ENCODE measurements at regions of chr21 and their contacts with region 1.

Region 1: DNA sequence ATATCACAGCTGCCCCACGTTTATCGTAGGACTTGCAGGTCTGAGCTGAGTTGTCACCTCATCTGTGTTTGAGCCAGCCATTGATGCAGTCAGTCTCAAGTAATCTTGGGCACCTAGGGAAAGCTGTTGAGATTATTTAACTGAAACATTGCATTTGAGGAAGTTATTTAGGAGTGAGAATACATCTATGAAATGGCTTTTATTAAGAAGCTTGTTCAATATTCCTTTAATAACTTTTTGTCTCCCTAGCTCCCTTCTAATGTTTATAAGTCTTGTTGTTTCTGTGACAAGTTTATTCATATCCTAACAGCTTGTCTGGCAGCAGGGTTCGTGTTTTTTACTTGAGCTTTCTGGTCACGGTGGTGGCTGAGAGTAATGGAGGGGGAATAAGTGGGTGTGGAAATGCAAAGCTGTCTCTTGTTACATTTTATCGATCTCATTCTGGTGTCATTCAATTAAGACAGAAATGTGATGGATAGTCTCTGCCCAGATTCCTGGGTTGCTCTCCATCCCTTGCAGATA is 555.9 kb downstream of the USP25 start:
- DNase-seq: no peak
- ATAC-seq: no peak
- H3K4me3 ChIP-seq: no peak overlapping the region
- H3K27ac ChIP-seq: no peak overlapping the region
- H3K4me1 ChIP-seq: peaks cover 14 to 49% of the 10 kb centered on the region in 2 donors
- H3K27me3 ChIP-seq: no peaks in the 10 kb centered on the region
- CTCF ChIP-seq: no peak
- POLR2A ChIP-seq: no peak

Region 2: DNA sequence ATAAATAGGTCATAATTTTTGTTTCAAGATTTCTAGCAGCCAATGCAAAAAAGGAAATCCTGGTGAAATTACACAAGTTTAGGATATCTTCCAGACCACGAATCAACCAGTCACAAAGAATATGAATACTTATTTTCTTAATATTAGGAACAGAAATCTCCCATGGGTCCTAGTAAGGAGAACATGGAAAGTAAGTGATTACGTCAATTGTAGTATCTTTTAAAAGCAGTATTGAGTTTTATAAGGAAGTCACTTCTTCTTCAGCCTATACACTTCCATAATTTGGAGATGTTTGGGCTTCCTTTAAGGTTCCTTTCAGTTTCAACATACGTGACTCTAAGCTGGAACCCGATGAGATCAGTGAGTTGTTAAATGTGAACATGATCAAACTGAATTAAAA is 21.3 kb before region 1 on chr21:
- in situ Hi-C with region 1: no loop called
- intact Hi-C with region 1: no loop called
- DNase-seq: no peak
- ATAC-seq: peak; percentile 50 to 51
- H3K4me3 ChIP-seq: peak overlapping the region; percentile 2 to 15 (median 9)
- H3K27ac ChIP-seq: peak overlapping the region; percentile 4 to 90 (median 41)
- H3K4me1 ChIP-seq: peaks cover 8 to 19% of the 10 kb centered on the region in 2 donors
- H3K27me3 ChIP-seq: no peaks in the 10 kb centered on the region
- CTCF ChIP-seq: no peak
- POLR2A ChIP-seq: no peak

Region 3: GRCh38 chr21:16302851-16303282 is 17.2 kb after region 1 on chr21:
- in situ Hi-C with region 1: no loop called
- intact Hi-C with region 1: loop called (anchors 2 kb)
- DNase-seq: peak; percentile 62 to 76
- ATAC-seq: peak; percentile 89 to 93
- H3K4me3 ChIP-seq: peak overlapping the region in 3 of 4 donors; percentile 5 to 31 (median 26)
- H3K27ac ChIP-seq: peak overlapping the region; percentile 78 to 85 (median 82)
- H3K4me1 ChIP-seq: peaks cover 15 to 20% of the 10 kb centered on the region in 2 donors
- H3K27me3 ChIP-seq: no peaks in the 10 kb centered on the region
- CTCF ChIP-seq: no peak
- POLR2A ChIP-seq: peak in 1 of 2 donors; percentile 39

Region 4: GRCh38 chr21:16323596-16323995 is 37.9 kb after region 1 on chr21:
- in situ Hi-C with region 1: no loop called
- intact Hi-C with region 1: loop called (anchors 1 kb)
- DNase-seq: no peak
- ATAC-seq: no peak
- H3K4me3 ChIP-seq: no peak overlapping the region
- H3K27ac ChIP-seq: no peak overlapping the region
- H3K4me1 ChIP-seq: peaks cover 0 to 6% of the 10 kb centered on the region in 2 donors
- H3K27me3 ChIP-seq: no peaks in the 10 kb centered on the region
- CTCF ChIP-seq: no peak
- POLR2A ChIP-seq: no peak

Region 5: DNA sequence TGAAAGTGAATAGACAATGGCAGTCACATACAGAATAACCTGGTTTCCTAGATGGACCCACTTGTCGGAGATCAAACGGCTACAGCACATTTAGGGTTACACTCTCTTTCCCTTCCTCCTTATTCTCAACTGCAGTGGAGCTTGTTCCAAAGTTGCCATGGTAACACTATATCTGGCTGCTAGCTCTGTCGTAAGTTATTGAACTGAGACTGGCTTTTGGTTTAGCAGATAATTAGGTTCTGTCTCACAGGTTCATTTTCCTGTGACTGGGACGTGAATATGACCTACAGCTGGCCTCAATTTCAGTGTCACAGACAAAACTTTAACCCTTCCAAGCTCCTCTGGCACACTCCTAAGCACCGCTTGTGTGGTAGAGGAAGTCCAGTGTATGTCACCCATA is 319.9 kb after region 1 on chr21:
- in situ Hi-C with region 1: no loop called
- intact Hi-C with region 1: no loop called
- DNase-seq: no peak
- ATAC-seq: no peak
- H3K4me3 ChIP-seq: no peak overlapping the region
- H3K27ac ChIP-seq: no peak overlapping the region
- H3K4me1 ChIP-seq: no peaks in the 10 kb centered on the region
- H3K27me3 ChIP-seq: no peaks in the 10 kb centered on the region
- CTCF ChIP-seq: no peak
- POLR2A ChIP-seq: no peak